Activated naive CD4-positive, alpha-beta T cell treated with anti-CD3 and anti-CD28 coated beads for 36 hours (primary cell): ENCODE measurements at regions of chr18 and their contacts with region 1.

Region 1: DNA sequence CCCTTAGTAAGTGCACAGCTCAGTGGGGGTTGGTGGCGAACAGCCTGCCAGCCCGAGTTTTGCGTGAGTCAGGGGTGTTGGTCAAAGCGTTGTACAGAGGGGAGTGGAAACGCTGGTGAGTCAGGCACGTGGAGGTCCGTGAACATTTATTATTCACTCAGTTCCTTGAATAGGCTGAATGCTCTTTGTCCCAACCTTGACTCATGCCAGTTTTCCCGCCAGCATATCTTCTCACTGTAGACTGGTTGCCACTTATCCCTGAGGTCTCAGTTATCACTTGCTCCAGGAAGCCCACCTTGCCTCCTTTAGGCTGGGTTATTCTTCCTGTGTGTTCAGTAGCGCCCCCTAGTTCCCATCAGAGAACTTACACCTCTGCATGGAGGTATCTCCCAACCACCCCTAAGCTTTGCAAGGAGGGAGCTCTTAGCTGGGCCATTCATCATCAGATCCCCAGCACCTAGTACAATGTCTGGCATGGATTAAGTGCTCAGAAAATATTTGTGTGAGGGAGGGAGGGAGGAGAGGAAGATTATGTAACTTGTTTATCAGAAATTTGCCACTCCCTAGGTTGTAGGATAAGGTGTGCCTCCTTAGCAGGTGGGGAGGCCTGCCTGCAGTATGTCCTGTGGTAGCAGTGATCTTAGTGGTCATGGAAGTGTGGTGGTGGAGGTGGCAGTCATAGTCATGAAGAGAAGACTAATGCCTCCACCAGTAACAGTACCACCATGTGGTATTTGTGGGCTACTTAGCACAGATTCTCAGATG is 72.1 kb downstream of the CABLES1 start:
- DNase-seq: no peak
- H3K4me3 Mint-ChIP-seq: no peak overlapping the region
- H3K27ac Mint-ChIP-seq: no peak overlapping the region
- H3K4me1 Mint-ChIP-seq: peaks cover 17% of the 10 kb centered on the region
- H3K27me3 Mint-ChIP-seq: peaks cover 9% of the 10 kb centered on the region

Region 2: DNA sequence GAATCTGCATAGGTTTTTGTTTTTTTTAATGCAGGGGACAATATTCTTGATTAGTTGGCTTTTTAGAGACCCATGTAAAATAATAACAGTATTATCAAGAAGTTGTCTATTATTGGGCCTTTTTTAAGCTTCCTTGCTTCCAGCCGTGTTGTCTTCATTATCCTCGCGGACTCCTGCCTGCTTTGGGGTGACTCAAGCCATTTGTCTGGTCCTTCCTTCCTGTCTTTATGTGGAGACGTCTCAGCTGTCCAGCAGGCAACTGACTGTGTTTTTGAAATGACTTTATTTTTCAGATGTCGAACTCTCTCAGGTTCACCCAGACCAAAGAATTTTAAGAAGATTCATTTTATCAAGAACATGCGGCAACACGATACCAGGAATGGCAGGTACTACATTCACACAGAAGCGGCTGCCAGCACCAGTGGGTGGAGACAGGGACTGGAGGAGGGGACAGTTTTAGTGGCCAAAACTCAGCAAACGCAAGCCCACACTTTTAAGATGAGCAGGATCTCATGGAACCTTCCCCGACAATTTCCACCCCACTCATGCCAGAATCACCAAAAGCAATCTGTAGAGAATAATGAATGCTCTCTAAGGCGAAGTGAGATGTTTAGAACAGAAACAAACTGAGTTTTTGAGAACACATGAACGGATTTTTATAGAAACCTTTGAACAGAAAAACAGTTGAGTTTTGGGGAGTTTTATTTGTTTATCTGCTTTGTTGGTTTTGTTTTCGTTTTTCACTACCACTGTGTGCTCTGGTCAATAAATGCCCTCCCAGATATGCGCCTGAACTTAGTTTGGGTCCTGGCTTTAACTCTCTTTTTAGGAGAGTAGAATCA is 13.0 kb before region 1 on chr18:
- CTCF ChIA-PET with region 1: interaction called, 12 read pairs
- intact Hi-C with region 1: no loop called
- DNase-seq: no peak
- H3K4me3 Mint-ChIP-seq: no peak overlapping the region
- H3K27ac Mint-ChIP-seq: no peak overlapping the region
- H3K4me1 Mint-ChIP-seq: peaks cover 9% of the 10 kb centered on the region
- H3K27me3 Mint-ChIP-seq: no peaks in the 10 kb centered on the region